ENCODE measurements at regions of chr17 and their contacts with region 1.

Region 1: DNA sequence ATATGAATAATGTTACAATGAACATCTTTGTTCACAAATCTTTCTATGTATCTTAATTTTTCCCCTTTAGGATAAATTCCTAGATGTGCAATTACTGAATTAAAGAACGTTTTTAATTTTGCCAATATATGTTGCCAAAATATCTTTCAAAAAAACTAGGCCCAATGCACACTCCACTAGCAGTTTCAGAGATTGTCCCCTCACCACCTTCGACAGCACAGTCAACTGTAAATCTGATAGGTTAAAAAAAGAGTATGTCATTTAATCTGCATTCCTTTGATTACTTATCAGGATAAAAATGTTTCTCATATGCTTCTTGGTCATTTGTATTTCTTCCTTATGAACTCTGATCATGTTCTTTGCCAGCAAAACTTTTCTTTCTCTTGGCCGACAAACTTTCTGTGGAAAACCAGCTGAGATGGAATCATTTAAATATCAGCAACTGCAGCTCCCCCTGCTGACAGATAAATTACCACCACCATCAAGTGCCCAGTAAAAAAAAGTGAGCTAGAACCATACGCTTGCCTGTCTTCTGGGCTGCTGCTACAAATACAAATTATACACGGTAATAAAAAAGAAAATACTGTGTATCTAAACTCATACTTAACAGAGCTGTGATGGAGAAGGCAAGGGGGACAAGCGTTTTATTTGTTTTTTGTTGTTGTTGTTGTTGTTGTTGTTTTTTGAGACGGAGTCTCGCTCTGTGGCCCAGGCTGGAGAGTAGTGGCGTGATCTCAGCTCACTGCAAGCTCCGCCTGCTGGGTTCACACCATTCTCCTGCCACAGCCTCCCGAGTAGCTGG is 19.6 kb upstream of the KANSL1 start:
- DNase-seq: peak; percentile 56 to 74 (median 64)
- H3K4me3 ChIP-seq: no peak overlapping the region
- H3K4me3 Mint-ChIP-seq: peak overlapping the region in 1 of 7 donors; percentile 22
- H3K27ac ChIP-seq: no peak overlapping the region
- H3K27ac Mint-ChIP-seq: peak overlapping the region; percentile 15 to 86 (median 50)
- H3K4me1 ChIP-seq: peaks cover 5% of the 10 kb centered on the region
- H3K4me1 Mint-ChIP-seq: peaks cover 18 to 43% (median 27%) of the 10 kb centered on the region in 3 donors
- H3K27me3 ChIP-seq: no peaks in the 10 kb centered on the region
- H3K27me3 Mint-ChIP-seq: no peaks in the 10 kb centered on the region

Region 2: GRCh38 chr17:46044286-46044928 is 168.4 kb before region 1 on chr17:
- CTCF ChIA-PET with region 1: interaction called, 29 read pairs
- POLR2A ChIA-PET with region 1: interaction called, 9 read pairs
- DNase-seq: peak; percentile 28 to 61 (median 32)
- H3K4me3 ChIP-seq: no peak overlapping the region
- H3K4me3 Mint-ChIP-seq: no peak overlapping the region
- H3K27ac ChIP-seq: no peak overlapping the region
- H3K27ac Mint-ChIP-seq: peak overlapping the region; percentile 5 to 89 (median 62)
- H3K4me1 ChIP-seq: no peaks in the 10 kb centered on the region
- H3K4me1 Mint-ChIP-seq: peaks cover 22 to 27% (median 25%) of the 10 kb centered on the region in 3 donors
- H3K27me3 ChIP-seq: no peaks in the 10 kb centered on the region
- H3K27me3 Mint-ChIP-seq: peaks cover 0 to under 1% of the 10 kb centered on the region in 2 donors

Region 3: GRCh38 chr17:46144246-46144645 is 68.6 kb before region 1 on chr17:
- CTCF ChIA-PET with region 1: interaction called, 10 read pairs
- POLR2A ChIA-PET with region 1: no interaction called
- DNase-seq: no peak
- H3K4me3 ChIP-seq: no peak overlapping the region
- H3K4me3 Mint-ChIP-seq: peak overlapping the region in 4 of 7 donors; percentile 12 to 44 (median 32)
- H3K27ac ChIP-seq: no peak overlapping the region
- H3K27ac Mint-ChIP-seq: peak overlapping the region in 7 of 8 donors; percentile 7 to 76 (median 32)
- H3K4me1 ChIP-seq: peaks cover 94% of the 10 kb centered on the region
- H3K4me1 Mint-ChIP-seq: peaks cover 86 to 96% (median 96%) of the 10 kb centered on the region in 3 donors
- H3K27me3 ChIP-seq: no peaks in the 10 kb centered on the region
- H3K27me3 Mint-ChIP-seq: no peaks in the 10 kb centered on the region

Region 4: DNA sequence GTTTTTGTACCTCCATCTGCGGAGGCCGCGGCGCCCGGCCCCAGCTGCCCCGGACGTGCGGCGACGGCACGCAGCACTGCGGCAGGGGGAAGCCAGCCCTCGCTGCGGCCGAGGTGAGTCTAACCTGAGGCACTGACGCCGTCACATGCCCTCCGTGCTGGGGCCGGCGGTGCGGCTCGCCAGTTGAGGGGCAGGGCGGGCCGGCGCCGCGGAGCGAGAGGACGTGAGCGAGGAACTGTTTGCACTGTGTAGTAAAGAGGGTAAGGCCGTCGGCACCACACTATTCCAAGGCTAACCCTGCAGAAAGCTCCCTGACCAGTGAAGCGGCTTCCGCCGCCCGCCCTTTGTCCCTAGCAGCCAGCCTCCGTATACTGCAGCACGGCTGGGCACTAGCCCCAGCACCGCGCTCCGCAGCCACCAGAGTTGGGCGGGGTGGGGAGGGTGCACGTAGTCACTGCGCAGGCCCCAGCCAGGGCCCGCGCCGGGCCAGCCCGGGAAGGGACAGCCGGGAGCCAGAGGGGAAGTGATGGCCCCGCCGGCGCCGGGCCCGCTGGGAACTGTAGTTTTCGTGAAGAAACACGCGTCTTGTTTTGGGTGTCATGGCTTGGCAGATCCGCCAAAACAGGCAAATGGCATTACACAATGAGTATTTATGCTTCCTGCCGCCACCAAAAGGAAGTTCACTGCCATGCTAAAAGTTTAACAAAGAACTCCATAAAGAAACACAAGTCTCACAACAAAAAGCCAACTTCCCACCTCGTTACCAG is 19.0 kb before region 1 on chr17:
- CTCF ChIA-PET with region 1: interaction called, 50 read pairs
- POLR2A ChIA-PET with region 1: interaction called, 16 read pairs
- DNase-seq: peak; percentile 90 to 96 (median 95)
- H3K4me3 ChIP-seq: peak overlapping the region; percentile 71
- H3K4me3 Mint-ChIP-seq: peak overlapping the region; percentile 79 to 94 (median 90)
- H3K27ac ChIP-seq: peak overlapping the region; percentile 96
- H3K27ac Mint-ChIP-seq: peak overlapping the region; percentile 92 to 99 (median 98)
- H3K4me1 ChIP-seq: peaks cover 65% of the 10 kb centered on the region
- H3K4me1 Mint-ChIP-seq: peaks cover 52 to 72% (median 66%) of the 10 kb centered on the region in 3 donors
- H3K27me3 ChIP-seq: no peaks in the 10 kb centered on the region
- H3K27me3 Mint-ChIP-seq: no peaks in the 10 kb centered on the region